Vagina (tissue), 2 donors: ENCODE measurements at regions of chr11 and their contacts with region 1.

Region 1: GRCh38 chr11:64553551-64554201 is 37.3 kb upstream of the SLC22A12 start:
- DNase-seq: no peak
- H3K4me3 ChIP-seq: no peak overlapping the region
- H3K27ac ChIP-seq: peak overlapping the region; percentile 83
- H3K4me1 ChIP-seq: peaks cover 28% of the 10 kb centered on the region
- H3K27me3 ChIP-seq: no peaks in the 10 kb centered on the region
- CTCF ChIP-seq: peak; percentile 96 to 98 (median 96)
- POLR2A ChIP-seq: no peak

Region 2: DNA sequence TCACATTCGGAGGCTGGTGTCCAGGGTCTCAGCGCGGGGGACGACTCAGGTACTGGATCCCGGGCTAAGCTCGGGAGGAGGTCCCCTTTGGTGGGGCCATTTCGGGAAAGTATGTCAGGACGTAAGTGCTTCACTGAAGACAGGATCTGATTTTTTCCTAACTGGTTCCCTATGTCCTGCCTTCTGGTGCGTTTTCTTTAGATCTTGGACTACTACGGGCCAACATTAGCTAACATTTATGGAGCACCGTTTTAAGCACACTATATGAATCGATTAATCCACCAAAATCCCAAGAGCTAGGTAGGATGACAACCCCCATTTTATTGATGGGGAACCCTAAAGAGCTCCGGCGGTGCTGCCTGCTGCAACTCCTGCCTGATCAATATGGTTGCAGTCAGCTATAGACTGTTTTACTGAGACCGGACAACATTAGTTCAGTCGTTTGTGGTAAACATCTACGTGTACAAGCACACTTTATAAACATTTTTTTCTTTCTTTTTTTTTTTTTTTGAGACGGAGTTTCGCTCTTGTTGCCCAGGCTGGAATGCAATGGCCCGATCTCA is 1697.3 kb before region 1 on chr11:
- intact Hi-C with region 1: no loop called
- DNase-seq: no peak
- H3K4me3 ChIP-seq: peak overlapping the region; percentile 48 to 79
- H3K27ac ChIP-seq: peak overlapping the region; percentile 65
- H3K4me1 ChIP-seq: peaks cover 39% of the 10 kb centered on the region
- H3K27me3 ChIP-seq: no peaks in the 10 kb centered on the region
- CTCF ChIP-seq: no peak
- POLR2A ChIP-seq: no peak

Region 3: GRCh38 chr11:64448599-64449556 is 104.8 kb before region 1 on chr11:
- intact Hi-C with region 1: no loop called
- DNase-seq: no peak
- H3K4me3 ChIP-seq: peak overlapping the region; percentile 28 to 41
- H3K27ac ChIP-seq: peak overlapping the region; percentile 60
- H3K4me1 ChIP-seq: peaks cover 18% of the 10 kb centered on the region
- H3K27me3 ChIP-seq: no peaks in the 10 kb centered on the region
- CTCF ChIP-seq: peak; percentile 21 to 75 (median 61)
- POLR2A ChIP-seq: no peak

Region 4: GRCh38 chr11:64500176-64501013 is 53.3 kb before region 1 on chr11:
- intact Hi-C with region 1: no loop called
- DNase-seq: no peak
- H3K4me3 ChIP-seq: no peak overlapping the region
- H3K27ac ChIP-seq: no peak overlapping the region
- H3K4me1 ChIP-seq: no peaks in the 10 kb centered on the region
- H3K27me3 ChIP-seq: no peaks in the 10 kb centered on the region
- CTCF ChIP-seq: no peak
- POLR2A ChIP-seq: no peak

Region 5: GRCh38 chr11:64652586-64653387 is 99.1 kb after region 1 on chr11:
- intact Hi-C with region 1: loop called (anchors 2 kb)
- DNase-seq: no peak
- H3K4me3 ChIP-seq: no peak overlapping the region
- H3K27ac ChIP-seq: no peak overlapping the region
- H3K4me1 ChIP-seq: peaks cover 21% of the 10 kb centered on the region
- H3K27me3 ChIP-seq: no peaks in the 10 kb centered on the region
- CTCF ChIP-seq: peak; percentile 83 to 96 (median 88)
- POLR2A ChIP-seq: no peak

Region 6: DNA sequence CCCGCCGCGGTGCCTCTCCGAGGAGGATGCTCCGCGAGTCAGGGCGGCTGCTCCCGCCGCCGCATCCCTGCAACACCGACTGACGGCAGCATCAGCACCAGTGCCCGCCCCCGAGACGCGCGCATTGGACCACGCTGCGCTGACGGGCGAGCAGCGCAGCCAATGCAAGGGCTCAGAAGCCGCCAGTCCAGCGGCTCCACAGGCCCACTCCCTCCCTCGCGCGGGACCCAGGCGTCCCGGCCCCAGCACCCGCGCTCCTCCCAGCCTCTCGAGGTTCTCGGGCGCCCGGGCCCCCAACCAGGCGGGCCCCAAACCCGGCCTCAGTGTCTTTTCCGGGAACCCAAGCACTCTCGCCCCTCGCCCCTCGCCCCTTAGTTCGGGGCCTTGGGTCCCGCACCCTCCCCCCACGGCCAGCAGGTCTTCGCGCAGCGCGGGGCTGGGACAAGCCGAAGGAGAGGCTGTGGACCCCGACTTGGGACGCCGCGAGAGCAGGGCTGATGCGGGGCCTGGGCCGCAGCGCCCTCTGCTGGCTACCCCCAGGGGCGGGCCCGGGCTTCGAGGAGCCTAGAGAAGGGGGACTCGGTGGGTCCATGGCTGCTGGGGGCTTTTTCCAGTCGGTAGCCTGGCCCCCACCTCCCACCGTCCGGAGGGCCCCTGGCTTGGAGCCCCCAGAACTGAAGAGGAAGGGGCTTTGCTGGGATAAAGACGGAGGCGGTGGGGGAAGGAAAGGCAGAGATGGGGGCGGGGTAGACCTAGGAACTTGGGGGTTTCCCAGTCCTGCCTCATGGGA is 169.6 kb after region 1 on chr11 and contains the start of gene NRXN2:
- intact Hi-C with region 1: loop called (anchors 5 kb)
- DNase-seq: no peak
- H3K4me3 ChIP-seq: peak within 1 kb of the TSS; percentile 60 to 73
- H3K27ac ChIP-seq: peak within 1 kb of the TSS; percentile 57
- H3K4me1 ChIP-seq: peaks cover 7% of the 10 kb centered on the region
- H3K27me3 ChIP-seq: peaks cover 4% of the 10 kb centered on the region
- CTCF ChIP-seq: peak; percentile 87 to 94 (median 94)
- POLR2A ChIP-seq: no peak
- total RNA-seq, gene NRXN2: 16.9 TPM